CD8-positive, alpha-beta T cell (primary cell): ENCODE measurements at regions of chr4 and their contacts with region 1.

Region 1: GRCh38 chr4:184538023-184538599 is 63.8 kb upstream of the IRF2 start:
- DNase-seq: peak; percentile 38 to 88 (median 65)
- ATAC-seq: peak; percentile 45
- H3K4me3 ChIP-seq: peak overlapping the region; percentile 57 to 63
- H3K4me3 Mint-ChIP-seq: peak overlapping the region; percentile 91
- H3K27ac ChIP-seq: peak overlapping the region; percentile 84 to 90
- H3K27ac Mint-ChIP-seq: peak overlapping the region; percentile 100
- H3K4me1 ChIP-seq: peaks cover 33% of the 10 kb centered on the region
- H3K4me1 Mint-ChIP-seq: peaks cover 46% of the 10 kb centered on the region
- H3K27me3 ChIP-seq: no peaks in the 10 kb centered on the region
- H3K27me3 Mint-ChIP-seq: no peaks in the 10 kb centered on the region
- CTCF ChIP-seq: peak; percentile 36

Region 2: GRCh38 chr4:183659029-183659871 is 878.9 kb before region 1 on chr4 and contains the starts of genes RWDD4 and TRAPPC11:
- CTCF ChIA-PET with region 1: no interaction called
- POLR2A ChIA-PET with region 1: no interaction called
- intact Hi-C with region 1: loop called in 1 of 2 experiments (anchors 2 kb)
- DNase-seq: peak; percentile 90 to 99 (median 95)
- ATAC-seq: peak; percentile 96
- H3K4me3 ChIP-seq: peak within 1 kb of the TSS; percentile 72 to 83
- H3K4me3 Mint-ChIP-seq: peak within 1 kb of the TSS; percentile 92
- H3K27ac ChIP-seq: peak within 1 kb of the TSS; percentile 83 to 89
- H3K27ac Mint-ChIP-seq: peak within 1 kb of the TSS; percentile 91
- H3K4me1 ChIP-seq: peaks cover 25% of the 10 kb centered on the region
- H3K4me1 Mint-ChIP-seq: peaks cover 42% of the 10 kb centered on the region
- H3K27me3 ChIP-seq: no peaks in the 10 kb centered on the region
- H3K27me3 Mint-ChIP-seq: no peaks in the 10 kb centered on the region
- CTCF ChIP-seq: no peak
- total RNA-seq, gene RWDD4: 9.0 to 12.1 TPM
- total RNA-seq, gene TRAPPC11: 14.7 to 22.1 TPM

Region 3: GRCh38 chr4:184250795-184251669 is 287.1 kb before region 1 on chr4:
- CTCF ChIA-PET with region 1: no interaction called
- POLR2A ChIA-PET with region 1: no interaction called
- intact Hi-C with region 1: no loop called
- DNase-seq: peak in 3 of 9 experiments; percentile 48 to 75 (median 67)
- ATAC-seq: peak; percentile 79
- H3K4me3 ChIP-seq: no peak overlapping the region
- H3K4me3 Mint-ChIP-seq: no peak overlapping the region
- H3K27ac ChIP-seq: no peak overlapping the region
- H3K27ac Mint-ChIP-seq: no peak overlapping the region
- H3K4me1 ChIP-seq: no peaks in the 10 kb centered on the region
- H3K4me1 Mint-ChIP-seq: peaks cover 2% of the 10 kb centered on the region
- H3K27me3 ChIP-seq: no peaks in the 10 kb centered on the region
- H3K27me3 Mint-ChIP-seq: peaks cover 6% of the 10 kb centered on the region
- CTCF ChIP-seq: peak; percentile 79

Region 4: GRCh38 chr4:184417802-184418511 is 120.2 kb before region 1 on chr4:
- CTCF ChIA-PET with region 1: no interaction called
- POLR2A ChIA-PET with region 1: interaction called, 8 read pairs
- intact Hi-C with region 1: loop called (anchors 1 to 2 kb)
- DNase-seq: peak in 3 of 9 experiments; percentile 14 to 68 (median 53)
- ATAC-seq: peak; percentile 71
- H3K4me3 ChIP-seq: peak overlapping the region in 1 of 2 experiments; percentile 44
- H3K4me3 Mint-ChIP-seq: peak overlapping the region; percentile 73
- H3K27ac ChIP-seq: peak overlapping the region; percentile 61 to 80
- H3K27ac Mint-ChIP-seq: peak overlapping the region; percentile 98
- H3K4me1 ChIP-seq: peaks cover 33% of the 10 kb centered on the region
- H3K4me1 Mint-ChIP-seq: peaks cover 71% of the 10 kb centered on the region
- H3K27me3 ChIP-seq: no peaks in the 10 kb centered on the region
- H3K27me3 Mint-ChIP-seq: no peaks in the 10 kb centered on the region
- CTCF ChIP-seq: no peak

Region 5: DNA sequence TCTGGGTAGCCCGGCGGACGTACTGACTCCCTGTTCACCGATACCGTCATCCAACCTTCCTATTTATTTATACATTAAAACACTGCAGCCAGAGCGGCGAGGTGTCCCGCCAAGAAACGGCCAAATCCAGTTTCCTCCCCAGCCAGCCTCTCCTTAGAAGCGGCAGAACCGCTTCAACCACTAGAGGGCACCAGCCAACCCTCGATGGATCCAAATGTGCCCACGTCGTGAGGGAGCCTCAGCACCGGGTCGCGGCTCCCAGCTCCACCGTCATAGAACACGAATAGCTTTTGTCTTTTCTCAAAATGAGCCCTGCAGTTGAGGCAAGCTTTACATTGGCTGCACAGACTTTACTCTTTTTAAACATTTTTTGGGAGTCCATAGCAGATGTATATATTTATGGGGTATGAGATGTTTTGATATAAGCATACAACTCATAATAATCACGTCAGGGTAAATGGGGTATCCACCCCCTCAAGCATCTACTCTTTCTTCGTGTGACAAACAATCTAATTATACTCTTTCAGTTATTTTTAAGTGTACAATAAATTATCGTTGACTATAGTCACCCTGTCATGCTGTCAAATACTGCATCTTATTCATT is 467.2 kb after region 1 on chr4:
- CTCF ChIA-PET with region 1: no interaction called
- POLR2A ChIA-PET with region 1: no interaction called
- intact Hi-C with region 1: no loop called
- DNase-seq: peak; percentile 50 to 82 (median 76)
- ATAC-seq: peak; percentile 96
- H3K4me3 ChIP-seq: no peak overlapping the region
- H3K4me3 Mint-ChIP-seq: peak overlapping the region; percentile 50
- H3K27ac ChIP-seq: no peak overlapping the region
- H3K27ac Mint-ChIP-seq: no peak overlapping the region
- H3K4me1 ChIP-seq: no peaks in the 10 kb centered on the region
- H3K4me1 Mint-ChIP-seq: peaks cover 4% of the 10 kb centered on the region
- H3K27me3 ChIP-seq: peaks cover 2 to 6% of the 10 kb centered on the region in 2 experiments
- H3K27me3 Mint-ChIP-seq: peaks cover 51% of the 10 kb centered on the region
- CTCF ChIP-seq: peak; percentile 88

Region 6: DNA sequence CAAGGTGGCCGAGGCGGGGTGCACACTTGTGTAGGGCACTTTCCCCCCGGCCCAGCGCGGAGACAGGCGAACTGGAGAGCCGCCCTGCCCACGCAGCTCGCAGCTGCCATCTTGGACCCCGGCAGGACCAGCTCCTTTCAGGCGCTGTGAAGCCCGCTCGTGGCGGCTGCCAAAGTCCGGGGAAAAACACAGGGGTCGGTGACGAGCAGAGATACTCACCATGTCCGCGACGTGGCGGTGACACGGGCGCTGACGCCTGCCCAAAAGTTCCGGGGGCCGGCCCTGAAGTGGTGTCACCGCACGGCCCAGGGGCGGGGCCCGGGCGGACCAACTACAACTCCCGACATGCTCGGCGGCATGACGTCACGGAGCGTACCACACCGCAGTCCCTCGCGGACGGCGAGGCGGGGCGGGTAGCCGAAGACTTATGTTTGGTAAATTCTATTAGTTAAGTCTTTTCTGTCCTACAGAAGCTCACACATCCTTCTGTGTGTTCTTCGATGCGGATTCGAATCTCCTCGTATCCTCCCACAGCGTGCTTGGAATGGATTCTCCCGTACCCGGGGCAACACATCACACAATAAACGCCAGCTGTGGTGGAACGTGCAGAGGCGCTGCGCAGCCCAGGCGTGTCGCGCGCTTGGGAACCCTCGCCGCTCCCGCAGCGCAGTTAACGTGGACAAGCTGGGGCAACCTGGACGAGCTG is 887.7 kb after region 1 on chr4 and contains the start of gene UFSP2:
- CTCF ChIA-PET with region 1: no interaction called
- POLR2A ChIA-PET with region 1: no interaction called
- intact Hi-C with region 1: loop called in 1 of 2 experiments (anchors 5 kb)
- DNase-seq: peak; percentile 75 to 97 (median 89)
- ATAC-seq: peak; percentile 86
- H3K4me3 ChIP-seq: peak within 1 kb of the TSS; percentile 87 to 90
- H3K4me3 Mint-ChIP-seq: peak within 1 kb of the TSS; percentile 83
- H3K27ac ChIP-seq: peak within 1 kb of the TSS; percentile 97 to 99
- H3K27ac Mint-ChIP-seq: peak within 1 kb of the TSS; percentile 100
- H3K4me1 ChIP-seq: peaks cover 18% of the 10 kb centered on the region
- H3K4me1 Mint-ChIP-seq: peaks cover 36% of the 10 kb centered on the region
- H3K27me3 ChIP-seq: no peaks in the 10 kb centered on the region
- H3K27me3 Mint-ChIP-seq: peaks cover 5% of the 10 kb centered on the region
- CTCF ChIP-seq: no peak
- total RNA-seq, gene UFSP2: 13.4 to 17.4 TPM

Region 7: GRCh38 chr4:186191200-186192065 is 1653.3 kb after region 1 on chr4 and contains the start of gene CYP4V2:
- CTCF ChIA-PET with region 1: no interaction called
- POLR2A ChIA-PET with region 1: no interaction called
- intact Hi-C with region 1: loop called in 1 of 2 experiments (anchors 5 kb)
- DNase-seq: peak; percentile 64 to 92 (median 85)
- ATAC-seq: peak; percentile 80
- H3K4me3 ChIP-seq: peak within 1 kb of the TSS; percentile 73 to 85
- H3K4me3 Mint-ChIP-seq: peak within 1 kb of the TSS; percentile 90
- H3K27ac ChIP-seq: peak within 1 kb of the TSS; percentile 89 to 91
- H3K27ac Mint-ChIP-seq: peak within 1 kb of the TSS; percentile 98
- H3K4me1 ChIP-seq: peaks cover 25% of the 10 kb centered on the region
- H3K4me1 Mint-ChIP-seq: peaks cover 57% of the 10 kb centered on the region
- H3K27me3 ChIP-seq: no peaks in the 10 kb centered on the region
- H3K27me3 Mint-ChIP-seq: no peaks in the 10 kb centered on the region
- CTCF ChIP-seq: no peak
- total RNA-seq, gene CYP4V2: 7.9 to 9.9 TPM